GM12878 (cell line): ENCODE measurements at regions of chr12 and their contacts with region 1.

Region 1: DNA sequence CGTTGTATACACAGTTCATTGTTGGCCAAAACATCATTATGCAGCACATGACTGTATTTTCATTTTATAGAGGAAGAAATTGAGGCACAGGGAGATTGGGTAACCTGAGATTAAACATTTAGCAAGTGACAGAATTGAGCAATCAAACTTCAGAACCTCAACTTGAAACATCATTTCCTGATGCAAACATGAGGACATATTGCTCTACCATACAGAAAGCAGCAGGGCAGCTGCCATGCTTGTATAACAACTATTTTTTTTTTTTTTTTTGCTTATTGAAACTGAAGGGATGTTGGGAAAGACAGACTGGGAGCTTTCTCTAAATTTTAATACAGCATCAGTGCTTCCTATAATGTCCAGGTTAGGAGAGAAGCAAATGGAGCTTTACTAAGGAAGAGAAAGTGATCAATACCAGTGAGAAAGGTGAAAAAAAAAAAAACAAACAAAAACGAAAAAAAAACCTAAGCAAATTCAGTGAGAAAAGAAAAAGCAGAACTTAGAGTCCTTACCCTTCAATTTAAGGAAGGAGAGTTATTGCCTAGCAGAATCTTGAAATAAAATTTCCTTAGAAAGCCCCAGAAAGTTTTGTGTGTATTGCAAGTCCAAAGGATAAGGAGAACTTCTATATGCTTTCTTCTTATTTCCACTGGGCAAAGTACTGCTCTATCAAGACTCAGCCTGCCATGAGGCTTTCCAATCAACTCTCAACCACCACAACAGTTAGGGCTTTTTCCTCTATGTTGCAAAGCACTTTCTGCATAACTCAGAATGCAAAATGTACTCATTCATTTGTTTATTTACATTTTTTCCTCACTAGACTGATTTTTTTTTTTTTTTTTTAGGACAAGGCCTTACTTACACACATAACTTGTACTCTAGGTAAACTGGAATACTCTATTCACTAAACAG is 21.6 kb downstream of the BTG1 start:
- DNase-seq: no peak
- ATAC-seq: peak; percentile 49
- H3K4me3 ChIP-seq: peak overlapping the region; percentile 16; the same call in 1 of the 2 replicates
- H3K27ac ChIP-seq: peak overlapping the region; percentile 54
- H3K4me1 ChIP-seq: peaks cover 11% of the 10 kb centered on the region
- H3K27me3 ChIP-seq: no peaks in the 10 kb centered on the region
- CTCF ChIP-seq: no peak
- EP300 ChIP-seq: no peak
- POLR2A ChIP-seq: no peak
- RAD21 ChIP-seq: no peak

Region 2: GRCh38 chr12:91931111-91931510 is 192.9 kb before region 1 on chr12:
- CTCF ChIA-PET with region 1: no interaction called
- POLR2A ChIA-PET with region 1: no interaction called
- RAD21 ChIA-PET with region 1: no interaction called
- SMC1A ChIA-PET with region 1: no interaction called
- in situ Hi-C with region 1: no loop called
- intact Hi-C with region 1: no loop called
- DNase-seq: no peak
- ATAC-seq: no peak
- H3K4me3 ChIP-seq: no peak overlapping the region
- H3K27ac ChIP-seq: no peak overlapping the region
- H3K4me1 ChIP-seq: no peaks in the 10 kb centered on the region
- H3K27me3 ChIP-seq: no peaks in the 10 kb centered on the region
- CTCF ChIP-seq: no peak
- EP300 ChIP-seq: no peak
- POLR2A ChIP-seq: no peak
- RAD21 ChIP-seq: no peak

Region 3: DNA sequence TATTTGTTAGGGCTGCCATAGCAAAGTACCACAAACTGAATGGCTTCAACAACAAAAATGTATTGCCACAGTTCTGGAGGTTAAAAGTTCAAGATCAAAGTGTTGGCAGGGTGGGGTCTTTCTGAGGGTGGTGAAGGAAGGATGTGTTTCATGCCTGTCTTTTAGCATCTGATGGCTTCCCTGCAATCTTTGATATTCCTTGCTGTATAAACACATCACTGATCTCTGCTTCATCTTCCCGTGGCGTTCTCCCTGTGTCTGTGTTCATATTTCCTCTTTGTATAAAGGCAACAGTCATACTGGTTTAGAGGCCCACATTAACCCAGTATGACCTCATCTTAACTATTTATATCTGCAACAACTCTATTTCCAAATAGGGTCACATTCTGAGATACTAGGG is 145.9 kb before region 1 on chr12:
- CTCF ChIA-PET with region 1: no interaction called
- POLR2A ChIA-PET with region 1: no interaction called
- RAD21 ChIA-PET with region 1: no interaction called
- SMC1A ChIA-PET with region 1: no interaction called
- in situ Hi-C with region 1: no loop called
- intact Hi-C with region 1: no loop called
- DNase-seq: no peak
- ATAC-seq: no peak
- H3K4me3 ChIP-seq: no peak overlapping the region
- H3K27ac ChIP-seq: no peak overlapping the region
- H3K4me1 ChIP-seq: no peaks in the 10 kb centered on the region
- H3K27me3 ChIP-seq: no peaks in the 10 kb centered on the region
- CTCF ChIP-seq: no peak
- EP300 ChIP-seq: no peak
- POLR2A ChIP-seq: no peak
- RAD21 ChIP-seq: no peak

Region 4: DNA sequence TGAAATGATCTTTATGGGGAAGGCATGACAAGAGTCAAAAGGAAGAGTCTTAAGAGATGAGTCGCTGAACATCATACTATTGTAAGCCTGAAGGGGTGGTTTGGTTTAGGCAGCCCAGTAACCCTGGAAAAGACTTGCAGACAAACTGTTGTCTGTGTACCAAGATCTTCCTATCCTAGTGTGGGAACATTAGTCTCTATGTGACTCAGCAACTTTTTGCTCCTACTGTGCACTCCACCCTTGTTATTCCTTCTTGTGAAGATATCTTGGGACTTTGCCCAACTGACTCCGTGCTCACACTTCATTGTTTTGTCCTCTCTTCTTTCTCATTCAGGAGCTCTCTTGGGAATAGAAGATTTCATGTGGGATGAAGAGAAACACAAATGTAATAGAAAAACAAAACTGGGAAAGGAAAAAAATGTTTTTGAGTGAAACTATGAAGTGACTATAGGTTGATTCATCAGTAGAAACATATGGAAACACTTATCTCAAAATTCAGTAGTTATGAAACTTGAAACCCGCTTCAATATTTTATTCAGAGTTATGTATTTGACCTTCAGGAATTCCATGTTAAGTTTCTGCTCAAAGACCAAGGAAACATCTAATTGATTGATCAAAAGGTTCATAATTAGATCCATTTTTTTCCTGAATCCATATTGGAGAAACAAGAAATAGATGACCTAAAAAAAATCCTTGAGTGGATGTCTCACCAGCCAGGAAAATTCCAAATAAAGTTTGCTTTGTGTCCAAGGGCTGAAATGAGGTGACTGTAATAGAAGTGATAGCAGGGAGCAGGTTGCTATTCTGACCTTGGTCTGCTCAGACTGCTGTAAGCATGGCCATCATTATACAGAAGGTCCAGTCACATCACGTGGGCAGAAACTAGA is 45.6 kb before region 1 on chr12:
- CTCF ChIA-PET with region 1: interaction called, 3 read pairs
- POLR2A ChIA-PET with region 1: no interaction called
- RAD21 ChIA-PET with region 1: interaction called, 6 read pairs
- SMC1A ChIA-PET with region 1: interaction called, 14 read pairs
- in situ Hi-C with region 1: no loop called
- intact Hi-C with region 1: no loop called
- DNase-seq: no peak
- ATAC-seq: peak; percentile 7
- H3K4me3 ChIP-seq: no peak overlapping the region
- H3K27ac ChIP-seq: no peak overlapping the region
- H3K4me1 ChIP-seq: peaks cover 36% of the 10 kb centered on the region
- H3K27me3 ChIP-seq: no peaks in the 10 kb centered on the region
- CTCF ChIP-seq: no peak
- EP300 ChIP-seq: no peak
- POLR2A ChIP-seq: no peak
- RAD21 ChIP-seq: no peak